Motor neuron (in vitro differentiated cells): ENCODE measurements at regions of chr19 and their contacts with region 1.

Region 1: DNA sequence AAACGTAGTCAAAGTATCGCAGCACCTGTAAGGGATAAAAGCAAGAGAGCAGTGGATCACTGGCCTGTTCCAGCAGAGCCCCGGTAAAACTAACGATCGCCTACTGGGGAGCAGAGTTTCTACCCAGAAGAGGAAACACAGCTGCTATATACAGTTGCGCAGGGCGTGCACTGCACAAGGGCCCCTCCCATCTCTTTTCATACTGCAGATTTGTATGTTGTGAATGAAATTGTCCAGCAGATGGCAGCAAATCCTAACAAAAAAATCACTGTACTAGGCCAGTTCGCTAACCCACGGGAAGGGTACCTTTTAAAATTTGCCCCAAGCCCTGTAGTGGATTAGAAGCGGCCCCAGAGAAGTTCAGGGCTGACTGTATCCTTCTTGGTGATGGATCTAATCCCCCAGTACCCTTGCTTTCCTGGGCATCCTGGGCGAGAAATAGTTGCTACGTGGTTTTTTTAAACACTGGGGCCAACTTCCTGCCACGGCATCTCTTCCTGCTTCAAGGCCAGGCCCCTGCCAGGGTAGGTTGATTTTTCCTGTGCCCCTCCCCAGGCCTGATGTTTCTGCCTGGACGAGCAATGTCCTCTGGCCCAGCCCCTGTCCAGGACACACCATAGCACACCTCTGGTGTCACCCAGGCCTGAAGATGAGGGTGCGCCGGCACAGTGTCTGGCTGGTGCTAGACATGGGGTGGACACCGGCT is 127.0 kb downstream of the IER2 start:
- ATAC-seq: peak; percentile 82 to 99 (median 86)
- H3K4me3 ChIP-seq: no peak overlapping the region
- H3K27ac ChIP-seq: no peak overlapping the region
- H3K4me1 ChIP-seq: no peaks in the 10 kb centered on the region

Region 2: DNA sequence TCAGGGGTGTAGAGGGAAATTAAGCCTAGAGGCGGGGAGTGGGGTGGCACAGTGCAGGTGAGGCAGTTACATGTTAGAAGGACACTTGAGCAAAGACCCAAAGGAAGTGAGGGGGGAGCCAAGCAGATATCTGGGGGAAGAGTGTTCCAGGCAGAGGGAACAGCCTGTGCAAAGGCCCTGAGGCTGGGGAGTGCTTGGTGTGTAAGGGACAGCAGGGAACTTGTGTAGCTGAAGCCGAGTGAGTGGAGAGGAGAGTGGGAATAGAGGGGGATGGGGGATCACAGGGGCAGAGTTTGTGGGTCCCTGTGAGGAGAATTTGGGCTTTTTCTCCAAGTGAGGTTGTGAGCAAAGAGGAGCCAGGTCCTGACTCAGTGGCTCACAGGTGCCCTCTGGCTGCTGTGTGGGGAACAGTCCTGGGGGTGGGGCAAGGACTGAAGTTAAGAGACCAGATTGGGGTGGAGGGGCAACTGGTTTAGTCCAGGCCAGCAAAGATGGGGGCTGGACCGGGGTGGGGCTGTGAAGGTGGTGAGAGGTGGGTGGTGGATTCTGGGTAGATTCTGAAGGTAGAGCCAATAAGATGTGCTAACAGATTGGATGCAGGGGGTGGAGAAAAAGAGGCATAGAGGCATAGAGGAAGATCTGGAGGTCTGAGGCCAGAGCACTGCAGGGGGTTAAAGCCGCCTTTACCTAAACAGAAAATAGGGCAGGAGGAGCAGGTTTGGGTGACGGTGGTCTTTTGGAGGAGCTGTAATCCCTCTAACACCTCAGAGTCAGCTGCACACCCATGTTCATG is 153.7 kb after region 1 on chr19:
- in situ Hi-C with region 1: loop called in 1 of 9 experiments (anchors 25 kb)
- ATAC-seq: peak in 3 of 8 experiments; percentile 23 to 61 (median 32)
- H3K4me3 ChIP-seq: no peak overlapping the region
- H3K27ac ChIP-seq: no peak overlapping the region
- H3K4me1 ChIP-seq: no peaks in the 10 kb centered on the region

Region 3: DNA sequence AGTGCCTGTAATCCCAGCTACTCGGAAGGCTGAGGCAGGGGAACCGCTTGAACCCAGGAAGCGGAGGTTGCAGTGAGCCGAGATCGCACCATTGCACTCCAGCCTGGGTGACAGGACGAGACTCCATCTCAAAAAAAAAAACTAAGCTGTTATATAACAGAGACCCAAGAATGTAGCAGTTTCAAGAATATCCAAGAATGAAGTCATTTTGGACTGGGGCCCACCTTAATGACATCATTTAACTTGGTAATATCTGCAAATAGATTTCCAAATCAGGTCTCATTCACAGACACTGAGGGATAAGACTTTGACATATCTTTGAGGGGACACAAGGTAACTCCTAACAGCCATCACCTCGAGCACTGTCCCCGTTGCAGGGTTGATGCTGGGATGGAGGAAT is 450.5 kb after region 1 on chr19:
- in situ Hi-C with region 1: loop called in 3 of 9 experiments (anchors 10 to 25 kb)
- ATAC-seq: no peak
- H3K4me3 ChIP-seq: no peak overlapping the region
- H3K27ac ChIP-seq: no peak overlapping the region
- H3K4me1 ChIP-seq: peaks cover 8 to 10% of the 10 kb centered on the region in 2 donors